Mammary epithelial cell (primary cell): ENCODE measurements at regions of chr2 and their contacts with region 1.

Region 1: GRCh38 chr2:96574364-96574763 is 37.8 kb downstream of the ARID5A start:
- DNase-seq: no peak
- H3K4me3 ChIP-seq: no peak overlapping the region
- H3K27ac ChIP-seq: no peak overlapping the region
- H3K4me1 ChIP-seq: no peaks in the 10 kb centered on the region
- H3K27me3 ChIP-seq: no peaks in the 10 kb centered on the region
- CTCF ChIP-seq: peak in 1 of 2 donors; percentile 11

Region 2: DNA sequence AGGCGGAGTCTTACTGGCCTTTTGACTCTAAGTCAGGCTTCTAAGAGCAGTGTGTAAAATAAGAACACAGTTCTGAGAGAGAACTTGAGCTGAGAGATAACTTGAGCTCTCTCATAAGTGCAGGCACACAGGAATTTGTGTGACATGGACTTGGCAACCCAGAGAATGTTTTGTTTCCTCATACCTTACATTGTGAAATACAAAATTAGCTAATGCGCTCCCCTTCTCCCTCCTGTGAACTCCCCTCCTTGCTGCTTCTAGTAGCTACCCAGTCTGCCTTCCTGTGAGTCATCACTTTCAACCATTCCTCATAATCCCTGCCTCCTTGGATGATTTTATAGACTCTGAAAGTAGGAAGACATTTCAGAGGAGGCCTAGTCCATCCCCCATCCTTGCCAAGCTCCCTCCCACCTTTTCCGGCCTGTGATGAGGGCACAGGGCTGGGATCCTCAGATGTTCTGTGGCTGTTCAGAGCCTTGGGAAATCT is 90.8 kb after region 1 on chr2:
- CTCF ChIA-PET with region 1: no interaction called
- dilution Hi-C with region 1: loop called (anchors 5 kb)
- in situ Hi-C with region 1: no loop called
- intact Hi-C with region 1: no loop called
- DNase-seq: peak; percentile 97
- H3K4me3 ChIP-seq: no peak overlapping the region
- H3K27ac ChIP-seq: peak overlapping the region; percentile 26
- H3K4me1 ChIP-seq: peaks cover 10% of the 10 kb centered on the region
- H3K27me3 ChIP-seq: no peaks in the 10 kb centered on the region
- CTCF ChIP-seq: no peak